ENCODE measurements at regions of chr9 and their contacts with region 1.

Region 1: DNA sequence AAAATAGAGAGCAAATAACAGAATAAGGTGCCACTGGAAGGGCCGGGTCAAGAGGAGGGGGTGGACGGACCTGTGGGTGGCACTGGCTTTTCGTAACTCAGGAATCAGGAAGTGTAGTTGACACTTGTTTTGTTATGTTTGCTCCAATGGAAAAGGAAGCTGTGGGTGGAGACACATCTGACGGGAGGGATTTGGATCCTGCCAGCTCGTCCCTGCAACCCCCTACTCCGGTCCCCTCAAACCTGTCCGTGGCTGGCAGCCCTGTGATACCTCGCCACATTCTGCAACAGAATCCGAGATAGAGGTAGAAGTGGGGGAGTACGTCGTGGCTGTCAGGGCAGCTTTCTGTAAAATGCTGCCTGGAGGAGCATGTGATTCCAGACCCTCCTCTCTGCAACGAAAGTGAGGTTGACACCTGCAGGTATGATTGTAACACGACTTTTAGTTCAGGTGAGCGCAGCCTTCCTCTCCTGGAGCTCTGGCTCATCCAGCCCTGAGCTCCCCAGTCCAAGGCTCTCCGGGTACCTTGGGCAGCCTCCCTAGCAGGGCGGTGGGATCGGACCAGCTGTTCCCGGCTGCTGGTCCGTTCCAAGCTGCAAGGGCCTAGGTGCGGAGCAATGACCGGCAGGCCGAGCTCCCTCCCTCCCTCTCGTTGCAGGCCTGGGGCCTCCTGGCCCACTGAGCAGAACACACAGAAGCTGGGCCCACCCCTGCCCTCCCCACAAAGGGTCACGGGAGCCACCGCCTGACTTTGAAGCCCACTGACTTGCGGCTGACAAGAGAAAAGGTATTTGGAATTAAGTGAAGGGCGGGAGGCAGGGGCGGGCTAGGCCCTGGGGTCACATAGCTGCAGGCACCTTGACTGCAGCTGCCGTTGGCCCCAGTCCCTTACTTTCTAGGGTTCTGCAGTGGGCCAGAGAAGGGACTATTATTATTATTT is 104.5 kb upstream of the IER5L start:
- DNase-seq: no peak
- ATAC-seq: no peak
- H3K4me3 ChIP-seq: no peak overlapping the region
- H3K27ac ChIP-seq: no peak overlapping the region
- H3K4me1 ChIP-seq: peaks cover 5% of the 10 kb centered on the region
- H3K27me3 ChIP-seq: no peaks in the 10 kb centered on the region
- CTCF ChIP-seq: no peak
- POLR2A ChIP-seq: no peak
- RAD21 ChIP-seq: no peak

Region 2: DNA sequence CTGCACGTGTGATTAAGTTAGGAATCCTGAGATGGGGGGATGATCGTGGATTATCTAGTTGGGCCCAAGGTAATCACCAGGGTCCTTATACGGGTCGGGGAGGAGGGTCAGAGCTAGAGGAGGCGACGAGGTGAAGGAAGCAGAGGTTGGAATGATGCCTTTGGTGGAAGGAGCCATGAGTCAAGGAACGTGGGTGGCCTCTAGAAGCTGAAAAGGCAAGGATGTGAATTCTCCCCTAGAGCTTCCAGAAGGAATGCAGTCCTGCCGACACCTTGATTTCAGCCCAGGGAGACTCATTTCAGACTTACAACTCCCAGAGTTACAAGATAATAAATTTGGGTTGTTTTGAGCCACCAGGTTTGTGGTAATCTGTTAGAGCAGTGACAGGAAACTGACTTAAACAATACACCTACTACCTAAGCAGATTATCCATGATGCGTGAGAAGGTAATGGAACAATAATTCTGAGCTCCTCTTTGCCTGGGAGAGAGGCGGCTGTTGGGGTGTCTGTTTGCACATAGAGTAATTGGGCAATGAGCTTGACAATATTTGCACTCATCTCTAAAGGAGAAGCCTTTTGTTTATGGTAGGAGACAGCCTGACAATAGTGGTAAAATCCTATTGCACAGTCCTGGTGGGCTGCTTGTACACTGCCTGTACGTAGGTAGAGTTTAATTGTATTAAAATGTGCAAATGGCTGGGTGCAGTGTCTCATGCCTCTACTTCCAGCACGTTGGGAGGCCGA is 24.9 kb after region 1 on chr9:
- CTCF ChIA-PET with region 1: no interaction called
- POLR2A ChIA-PET with region 1: no interaction called
- dilution Hi-C with region 1: no loop called
- in situ Hi-C with region 1: no loop called
- intact Hi-C with region 1: no loop called
- DNase-seq: no peak
- ATAC-seq: no peak
- H3K4me3 ChIP-seq: no peak overlapping the region
- H3K27ac ChIP-seq: no peak overlapping the region
- H3K4me1 ChIP-seq: peaks cover 3% of the 10 kb centered on the region; the same call in 1 of the 2 replicates
- H3K27me3 ChIP-seq: no peaks in the 10 kb centered on the region
- CTCF ChIP-seq: no peak
- POLR2A ChIP-seq: no peak
- RAD21 ChIP-seq: no peak

Region 3: DNA sequence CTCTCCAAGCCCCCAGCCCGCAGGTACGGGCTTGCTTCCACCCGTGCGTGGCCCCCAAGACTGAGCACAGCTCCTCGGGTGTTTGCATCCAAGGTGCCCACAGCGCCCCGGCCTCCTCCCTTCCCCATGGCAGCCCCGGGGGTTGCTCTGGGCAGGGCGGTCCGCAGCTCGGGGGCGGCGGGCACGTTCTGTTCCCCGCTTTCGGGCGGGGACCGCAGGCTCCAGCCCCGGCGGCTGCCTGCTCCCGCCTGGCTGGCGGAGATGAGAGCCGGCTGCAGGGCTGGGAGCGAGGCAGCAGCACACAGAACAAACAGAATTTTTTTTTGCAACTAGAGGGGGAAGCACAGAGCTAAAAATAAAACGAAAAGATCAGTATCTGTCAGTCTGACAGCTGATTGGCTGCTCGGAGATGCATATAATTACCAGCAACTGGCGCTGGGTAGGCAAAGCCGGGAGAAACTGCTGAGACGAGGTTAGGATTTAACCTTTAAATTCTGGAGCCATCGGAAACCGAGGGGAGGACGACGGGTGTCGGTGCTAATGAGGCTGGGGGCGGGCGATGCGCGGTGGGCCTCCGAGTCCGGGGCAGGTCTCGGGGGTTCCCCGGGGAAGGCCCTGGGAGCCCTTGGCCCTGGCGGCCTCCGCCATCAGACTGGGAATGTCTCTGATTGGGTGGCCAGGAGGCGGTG is 38.2 kb after region 1 on chr9:
- CTCF ChIA-PET with region 1: no interaction called
- POLR2A ChIA-PET with region 1: no interaction called
- dilution Hi-C with region 1: no loop called
- in situ Hi-C with region 1: no loop called
- intact Hi-C with region 1: no loop called
- DNase-seq: peak; percentile 82
- ATAC-seq: peak; percentile 74
- H3K4me3 ChIP-seq: 0 out of 2 replicates have a peak overlapping the region, but pooled peaks have one; percentile 2
- H3K27ac ChIP-seq: peak overlapping the region; percentile 48
- H3K4me1 ChIP-seq: peaks cover 30% of the 10 kb centered on the region
- H3K27me3 ChIP-seq: no peaks in the 10 kb centered on the region
- CTCF ChIP-seq: peak; percentile 27; the same call in 1 of the 2 replicates
- POLR2A ChIP-seq: no peak
- RAD21 ChIP-seq: peak; percentile 46

Region 4: DNA sequence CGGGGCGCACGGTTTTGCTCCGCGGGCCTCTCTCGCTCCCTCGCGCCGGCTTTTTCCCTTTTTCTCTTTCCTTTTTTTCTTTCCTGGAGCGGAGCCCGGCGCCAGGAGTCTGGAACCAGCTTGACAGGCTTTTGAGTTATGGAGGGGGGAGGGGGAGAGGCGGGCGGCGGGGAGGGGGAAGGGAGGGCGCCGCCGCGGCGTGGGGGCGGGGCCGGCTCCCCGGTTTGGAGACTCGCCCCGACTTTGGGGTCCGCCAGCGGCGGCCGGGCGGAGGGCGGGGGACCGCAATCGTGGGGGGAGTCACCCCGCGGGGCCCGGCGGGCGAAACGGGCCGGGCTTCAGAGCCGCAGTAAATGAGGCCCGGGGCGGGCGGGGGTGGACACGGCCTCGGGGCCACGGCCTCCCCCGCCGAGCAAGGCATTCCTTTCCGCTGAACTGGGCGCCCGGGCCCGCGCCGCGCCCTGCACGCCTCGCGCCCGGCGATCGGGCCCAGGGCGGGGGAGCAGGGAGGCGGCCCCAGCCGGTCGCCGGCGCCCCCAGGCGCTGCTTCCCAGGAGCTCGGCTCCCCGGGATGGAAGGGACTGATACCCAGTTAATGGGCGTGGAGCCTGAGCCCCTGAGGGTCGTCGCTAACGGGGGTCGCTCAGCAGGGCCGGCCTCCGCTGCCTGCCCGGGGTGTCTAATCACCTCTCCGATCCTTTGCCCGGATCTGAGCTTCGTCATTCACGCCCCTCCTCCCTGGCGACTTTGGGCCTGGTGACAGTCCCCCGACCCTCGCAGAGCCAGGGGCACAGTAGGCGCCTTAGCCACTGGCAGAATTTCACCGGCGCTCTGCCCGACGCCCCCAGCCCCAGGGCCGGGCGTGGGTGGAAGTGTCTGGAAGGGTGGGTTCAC is 200.2 kb after region 1 on chr9:
- CTCF ChIA-PET with region 1: no interaction called
- POLR2A ChIA-PET with region 1: no interaction called
- dilution Hi-C with region 1: no loop called
- in situ Hi-C with region 1: no loop called
- intact Hi-C with region 1: no loop called
- DNase-seq: peak; percentile 84
- ATAC-seq: peak; percentile 86
- H3K4me3 ChIP-seq: no peak overlapping the region
- H3K27ac ChIP-seq: peak overlapping the region; percentile 99
- H3K4me1 ChIP-seq: peaks cover 49% of the 10 kb centered on the region
- H3K27me3 ChIP-seq: no peaks in the 10 kb centered on the region
- CTCF ChIP-seq: peak; percentile 43
- POLR2A ChIP-seq: peak; percentile 30
- RAD21 ChIP-seq: peak; percentile 59

Region 5: GRCh38 chr9:129726322-129727160 is 444.0 kb after region 1 on chr9:
- CTCF ChIA-PET with region 1: no interaction called
- POLR2A ChIA-PET with region 1: interaction called, 17 read pairs
- dilution Hi-C with region 1: no loop called
- in situ Hi-C with region 1: no loop called
- intact Hi-C with region 1: no loop called
- DNase-seq: peak; percentile 78
- ATAC-seq: peak; percentile 96
- H3K4me3 ChIP-seq: no peak overlapping the region
- H3K27ac ChIP-seq: peak overlapping the region; percentile 42; the same call in 1 of the 2 replicates
- H3K4me1 ChIP-seq: peaks cover 8% of the 10 kb centered on the region; the same call in 1 of the 2 replicates
- H3K27me3 ChIP-seq: no peaks in the 10 kb centered on the region
- CTCF ChIP-seq: peak; percentile 88
- POLR2A ChIP-seq: no peak
- RAD21 ChIP-seq: peak; percentile 77